ENCODE measurements at regions of chr10 and their contacts with region 1.

Region 1: DNA sequence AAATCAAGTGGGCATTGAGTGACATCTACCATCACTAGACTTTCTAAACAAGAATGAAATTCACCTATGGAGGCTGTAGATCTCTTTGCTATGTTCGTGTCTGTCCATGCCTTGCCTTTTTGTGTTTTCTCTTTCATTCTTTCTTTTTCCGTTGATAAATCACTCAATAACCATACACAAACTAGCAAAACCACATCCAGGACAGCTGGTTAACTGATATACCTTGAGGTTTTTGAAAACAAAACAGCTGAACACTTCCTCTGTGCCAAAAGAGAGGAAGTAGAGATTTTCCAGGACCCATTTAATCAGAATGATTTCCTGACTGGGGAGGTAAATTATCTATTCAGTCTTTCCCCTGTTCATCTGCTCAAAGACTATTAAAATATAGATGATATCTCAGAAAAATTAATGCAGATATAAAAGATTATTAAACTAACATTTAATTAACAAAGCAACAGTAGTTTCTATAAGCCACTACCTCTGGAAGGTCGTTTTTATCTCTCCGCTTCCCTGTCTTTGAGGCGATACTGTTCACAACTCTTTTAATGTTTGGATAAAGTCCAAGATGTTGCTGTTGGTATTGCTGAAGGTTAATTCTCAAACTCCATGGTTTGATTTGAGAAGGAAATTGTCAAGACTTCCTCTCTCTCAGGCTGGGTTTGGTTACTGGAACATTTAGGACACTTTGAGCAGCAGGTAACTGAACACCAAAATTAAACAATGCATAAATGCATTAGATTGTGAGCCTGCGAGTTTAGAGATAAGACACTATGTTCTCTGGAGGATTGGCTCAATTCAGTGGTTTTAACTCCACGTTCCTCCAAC is 24.4 kb upstream of the C10orf67 start:
- DNase-seq: peak; percentile 84
- H3K4me3 Mint-ChIP-seq: peak overlapping the region; percentile 58
- H3K27ac Mint-ChIP-seq: peak overlapping the region; percentile 81
- H3K4me1 Mint-ChIP-seq: peaks cover 57% of the 10 kb centered on the region
- H3K27me3 Mint-ChIP-seq: no peaks in the 10 kb centered on the region

Region 2: GRCh38 chr10:22988581-22989360 is 380.3 kb before region 1 on chr10:
- intact Hi-C with region 1: no loop called
- DNase-seq: peak; percentile 92
- H3K4me3 Mint-ChIP-seq: no peak overlapping the region
- H3K27ac Mint-ChIP-seq: no peak overlapping the region
- H3K4me1 Mint-ChIP-seq: peaks cover 8% of the 10 kb centered on the region
- H3K27me3 Mint-ChIP-seq: peaks cover 20% of the 10 kb centered on the region

Region 3: DNA sequence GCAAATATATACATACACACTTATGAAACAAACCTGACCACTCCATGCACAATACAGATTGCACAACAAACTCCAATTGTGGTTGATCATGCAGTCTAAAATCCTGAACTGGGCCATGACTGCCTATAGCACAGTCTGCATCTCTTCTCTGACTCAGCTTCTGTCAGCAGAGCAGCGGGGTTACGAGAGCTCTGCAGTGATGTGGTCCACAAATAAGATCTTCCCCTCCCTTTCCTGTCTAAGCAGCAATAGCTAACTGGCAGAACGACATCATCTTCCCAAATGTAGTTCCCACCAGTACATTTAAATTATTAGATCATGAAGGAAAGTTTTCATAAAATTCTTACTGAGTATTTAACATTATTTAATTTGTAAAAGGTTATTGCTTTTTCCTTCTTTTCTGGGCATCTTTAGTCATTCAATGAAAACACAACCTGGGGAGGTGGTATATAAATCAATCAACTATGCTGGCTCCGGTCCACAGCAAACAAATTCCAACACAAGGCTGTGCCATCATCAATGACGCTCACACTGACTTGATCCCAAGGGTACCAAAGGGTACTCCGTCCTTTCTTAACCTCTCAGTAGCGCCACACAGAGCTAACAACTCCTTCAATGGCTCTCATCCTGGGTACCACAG is 1337.6 kb after region 1 on chr10:
- intact Hi-C with region 1: loop called (anchors 10 kb)
- DNase-seq: peak; percentile 78
- H3K4me3 Mint-ChIP-seq: no peak overlapping the region
- H3K27ac Mint-ChIP-seq: no peak overlapping the region
- H3K4me1 Mint-ChIP-seq: peaks cover 22% of the 10 kb centered on the region
- H3K27me3 Mint-ChIP-seq: no peaks in the 10 kb centered on the region

Region 4: DNA sequence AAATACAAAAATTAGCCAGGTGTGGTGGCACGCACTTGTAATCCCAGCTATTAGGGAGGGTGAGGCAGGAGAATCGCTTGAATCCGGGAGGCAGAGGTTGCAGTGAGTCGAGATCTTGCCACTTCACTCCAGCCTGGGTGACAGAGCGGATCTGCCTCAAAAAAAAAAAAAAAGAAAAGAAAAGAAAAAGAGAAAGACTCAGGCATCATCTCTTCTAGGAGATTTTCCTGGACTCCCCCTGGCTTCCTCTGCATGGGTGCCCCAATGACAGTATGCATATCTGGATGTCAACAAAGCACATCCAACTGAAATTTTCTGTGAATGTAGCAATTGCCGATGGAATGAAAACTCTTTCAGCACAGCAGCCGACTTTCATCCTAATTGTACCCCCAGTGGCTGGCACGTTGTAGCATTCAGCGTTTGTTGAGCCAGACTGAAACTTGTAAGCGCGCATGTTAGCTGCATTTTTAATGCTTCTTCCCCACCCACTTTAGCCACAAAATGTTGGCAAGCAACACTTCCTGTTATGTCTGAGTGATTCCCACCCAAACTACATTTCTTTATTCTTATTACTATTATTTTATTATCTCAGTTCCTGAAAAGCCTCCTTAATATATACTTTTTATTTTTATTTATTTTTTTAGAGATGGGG is 1513.1 kb after region 1 on chr10:
- intact Hi-C with region 1: loop called (anchors 10 kb)
- DNase-seq: peak; percentile 74
- H3K4me3 Mint-ChIP-seq: peak overlapping the region; percentile 62
- H3K27ac Mint-ChIP-seq: no peak overlapping the region
- H3K4me1 Mint-ChIP-seq: peaks cover 21% of the 10 kb centered on the region
- H3K27me3 Mint-ChIP-seq: no peaks in the 10 kb centered on the region